CD4-positive, alpha-beta T cell (primary cell): ENCODE measurements at regions of chr19 and their contacts with region 1.

Region 1: GRCh38 chr19:18450931-18451845 is 13.3 kb upstream of the ISYNA1 start:
- DNase-seq: peak; percentile 75 to 93 (median 86)
- ATAC-seq: peak; percentile 94
- H3K4me3 ChIP-seq: no peak overlapping the region
- H3K4me3 Mint-ChIP-seq: no peak overlapping the region
- H3K27ac ChIP-seq: no peak overlapping the region
- H3K27ac Mint-ChIP-seq: no peak overlapping the region
- H3K4me1 ChIP-seq: peaks cover 11% of the 10 kb centered on the region
- H3K4me1 Mint-ChIP-seq: peaks cover 8% of the 10 kb centered on the region
- H3K27me3 ChIP-seq: no peaks in the 10 kb centered on the region
- H3K27me3 Mint-ChIP-seq: no peaks in the 10 kb centered on the region
- CTCF ChIP-seq: peak; percentile 94

Region 2: DNA sequence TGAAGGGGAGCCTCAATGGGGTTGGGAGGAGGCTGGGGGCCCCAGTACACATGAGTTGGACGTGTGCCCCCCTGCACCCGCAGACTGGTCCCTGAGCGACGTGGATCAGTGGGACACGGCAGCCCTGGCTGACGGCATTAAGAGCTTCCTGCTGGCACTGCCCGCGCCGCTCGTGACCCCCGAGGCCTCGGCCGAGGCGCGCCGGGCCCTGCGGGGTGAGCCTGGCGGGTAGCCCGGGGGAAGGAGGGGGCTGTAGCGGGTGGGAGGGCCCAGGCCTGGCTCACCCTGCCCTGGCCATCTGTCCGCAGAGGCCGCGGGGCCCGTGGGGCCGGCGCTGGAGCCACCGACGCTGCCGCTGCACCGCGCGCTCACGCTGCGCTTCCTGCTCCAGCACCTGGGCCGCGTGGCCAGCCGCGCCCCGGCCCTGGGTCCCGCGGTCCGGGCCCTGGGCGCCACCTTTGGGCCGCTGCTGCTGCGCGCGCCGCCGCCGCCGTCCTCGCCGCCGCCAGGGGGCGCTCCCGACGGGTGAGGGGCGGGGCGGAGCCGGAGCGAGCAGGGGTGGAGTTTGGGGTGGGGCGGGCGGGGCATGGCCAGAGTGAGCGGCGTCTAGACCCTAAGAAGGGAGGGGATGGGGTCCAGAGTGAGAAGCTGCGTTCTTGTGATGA is 290.1 kb before region 1 on chr19:
- CTCF ChIA-PET with region 1: no interaction called
- POLR2A ChIA-PET with region 1: no interaction called
- intact Hi-C with region 1: no loop called
- DNase-seq: peak; percentile 58 to 92 (median 82)
- ATAC-seq: peak; percentile 99
- H3K4me3 ChIP-seq: peak overlapping the region; percentile 20
- H3K4me3 Mint-ChIP-seq: no peak overlapping the region
- H3K27ac ChIP-seq: no peak overlapping the region
- H3K27ac Mint-ChIP-seq: no peak overlapping the region
- H3K4me1 ChIP-seq: peaks cover 21% of the 10 kb centered on the region
- H3K4me1 Mint-ChIP-seq: peaks cover 12% of the 10 kb centered on the region
- H3K27me3 ChIP-seq: no peaks in the 10 kb centered on the region
- H3K27me3 Mint-ChIP-seq: no peaks in the 10 kb centered on the region
- CTCF ChIP-seq: peak; percentile 53

Region 3: DNA sequence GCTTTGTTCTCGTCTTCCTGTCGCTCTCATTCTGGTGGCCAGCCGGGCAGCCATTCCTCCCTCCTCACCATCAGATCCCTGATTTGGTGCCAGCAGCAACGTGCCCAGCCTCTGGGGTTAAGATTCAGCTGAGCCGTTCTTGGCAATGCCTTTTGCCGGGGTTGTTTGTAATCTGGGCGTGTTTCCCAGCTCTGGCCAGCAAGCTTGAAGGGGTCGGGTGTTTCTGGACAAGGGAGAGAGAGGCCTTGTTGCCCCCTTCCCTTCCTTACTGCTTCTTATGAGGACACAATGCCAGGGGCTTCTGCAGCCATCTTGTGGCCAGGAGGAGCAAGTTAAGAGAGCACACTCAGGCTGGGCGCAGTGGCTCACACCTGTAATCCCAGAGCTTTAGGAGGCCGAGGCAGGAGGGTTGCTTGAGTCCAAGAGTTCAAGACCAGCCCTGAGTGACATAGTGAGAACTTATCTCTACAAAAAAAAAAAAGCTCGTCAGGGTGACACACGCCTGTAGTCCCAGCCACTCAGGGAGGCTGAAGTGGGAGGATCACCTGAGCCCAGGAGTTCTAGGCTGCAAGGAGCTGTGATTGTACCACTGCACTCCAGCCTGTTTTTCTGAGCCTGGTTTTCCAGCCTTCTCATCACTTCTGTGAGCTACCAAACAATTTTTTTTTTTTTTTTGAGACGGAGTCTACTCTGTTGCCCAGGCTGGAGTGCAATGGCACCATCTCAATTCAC is 221.6 kb after region 1 on chr19:
- CTCF ChIA-PET with region 1: no interaction called
- POLR2A ChIA-PET with region 1: no interaction called
- intact Hi-C with region 1: loop called in 1 of 2 experiments (anchors 5 kb)
- DNase-seq: no peak
- ATAC-seq: no peak
- H3K4me3 ChIP-seq: no peak overlapping the region
- H3K4me3 Mint-ChIP-seq: no peak overlapping the region
- H3K27ac ChIP-seq: no peak overlapping the region
- H3K27ac Mint-ChIP-seq: no peak overlapping the region
- H3K4me1 ChIP-seq: no peaks in the 10 kb centered on the region
- H3K4me1 Mint-ChIP-seq: no peaks in the 10 kb centered on the region
- H3K27me3 ChIP-seq: no peaks in the 10 kb centered on the region
- H3K27me3 Mint-ChIP-seq: no peaks in the 10 kb centered on the region
- CTCF ChIP-seq: no peak

Region 4: DNA sequence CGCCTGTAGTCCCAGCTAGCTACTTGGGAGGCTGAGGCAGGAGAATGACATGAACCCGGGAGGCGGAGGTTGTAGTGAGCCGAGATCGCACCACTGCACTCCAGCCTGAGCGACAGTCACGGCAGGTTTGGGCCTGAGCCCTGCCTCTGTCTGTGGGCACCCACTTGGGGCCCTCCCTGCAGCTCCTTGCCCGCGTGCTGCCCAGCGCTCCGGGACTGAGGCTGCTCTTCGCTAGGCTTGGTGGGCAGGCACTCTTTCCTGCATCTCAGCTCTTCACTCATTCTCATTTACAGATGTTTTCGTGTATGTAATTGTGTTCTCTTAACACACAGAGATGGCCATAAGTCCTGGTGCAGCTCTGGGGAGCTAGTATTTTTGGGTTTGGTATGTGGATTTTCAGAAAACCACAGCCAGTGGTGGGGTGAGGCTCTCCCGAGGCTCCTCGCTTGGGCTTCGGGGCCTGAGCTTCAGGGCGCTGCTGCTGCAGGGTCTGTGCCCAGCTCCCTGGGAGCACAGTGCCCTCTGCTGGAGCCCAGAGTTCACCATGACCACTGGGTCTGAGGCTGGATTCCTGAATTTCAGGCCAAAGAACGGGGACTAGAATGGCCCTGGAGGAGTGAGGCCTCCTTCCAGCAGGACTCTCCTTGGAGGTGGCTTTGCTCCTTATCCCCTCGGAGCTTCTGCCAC is 395.8 kb after region 1 on chr19:
- CTCF ChIA-PET with region 1: interaction called, 5 read pairs
- POLR2A ChIA-PET with region 1: no interaction called
- intact Hi-C with region 1: loop called (anchors 1 kb)
- DNase-seq: peak; percentile 45 to 82 (median 63)
- ATAC-seq: peak; percentile 71
- H3K4me3 ChIP-seq: no peak overlapping the region
- H3K4me3 Mint-ChIP-seq: peak overlapping the region; percentile 74
- H3K27ac ChIP-seq: no peak overlapping the region
- H3K27ac Mint-ChIP-seq: peak overlapping the region; percentile 68
- H3K4me1 ChIP-seq: peaks cover 75% of the 10 kb centered on the region
- H3K4me1 Mint-ChIP-seq: peaks cover 59% of the 10 kb centered on the region
- H3K27me3 ChIP-seq: no peaks in the 10 kb centered on the region
- H3K27me3 Mint-ChIP-seq: no peaks in the 10 kb centered on the region
- CTCF ChIP-seq: peak; percentile 69

Region 5: DNA sequence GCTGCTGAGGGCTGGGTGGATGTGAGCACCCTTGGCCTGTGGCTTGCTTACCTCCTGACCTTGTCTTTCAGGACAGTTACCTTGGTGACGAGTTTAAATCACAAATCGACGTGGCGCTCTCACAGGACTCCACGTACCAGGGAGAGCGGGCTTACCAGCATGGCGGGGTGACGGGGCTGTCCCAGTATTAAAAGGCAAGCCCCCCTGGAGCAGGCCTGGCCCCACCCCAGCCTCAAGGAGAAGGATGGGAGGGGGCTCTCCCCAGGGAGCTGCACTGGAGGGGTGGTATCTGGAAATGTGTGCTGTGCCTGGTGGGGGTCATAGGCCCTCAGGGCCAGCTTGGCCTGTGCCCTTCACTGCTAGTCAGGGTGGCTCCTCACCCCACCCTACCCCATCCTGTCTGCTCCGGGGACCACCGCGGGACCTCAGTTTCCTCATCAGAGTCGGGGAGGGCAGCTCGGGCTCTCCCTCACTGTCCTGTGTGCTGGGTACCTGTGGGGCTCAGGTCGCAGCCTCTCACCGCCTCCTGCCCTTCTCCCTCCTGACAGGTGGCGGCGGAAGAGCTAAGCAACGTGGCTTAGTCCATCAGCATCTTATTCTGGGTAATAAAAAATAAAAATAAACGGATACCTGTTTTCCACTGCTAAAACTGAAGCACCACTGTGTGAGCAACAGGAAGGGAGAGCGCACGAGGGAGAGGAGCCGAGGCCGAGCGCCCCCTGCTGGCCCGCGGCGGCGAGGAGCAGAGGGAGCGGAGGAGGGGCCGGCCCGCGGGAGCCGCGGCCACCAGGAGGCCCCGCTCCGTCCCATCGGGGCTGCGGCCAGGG is 415.0 kb after region 1 on chr19:
- CTCF ChIA-PET with region 1: interaction called, 3 read pairs
- POLR2A ChIA-PET with region 1: no interaction called
- intact Hi-C with region 1: loop called in 1 of 2 experiments (anchors 5 kb)
- DNase-seq: peak in 13 of 14 experiments; percentile 41 to 83 (median 56)
- ATAC-seq: peak; percentile 83
- H3K4me3 ChIP-seq: no peak overlapping the region
- H3K4me3 Mint-ChIP-seq: no peak overlapping the region
- H3K27ac ChIP-seq: no peak overlapping the region
- H3K27ac Mint-ChIP-seq: no peak overlapping the region
- H3K4me1 ChIP-seq: peaks cover 17% of the 10 kb centered on the region
- H3K4me1 Mint-ChIP-seq: peaks cover 9% of the 10 kb centered on the region
- H3K27me3 ChIP-seq: peaks cover 5 to 7% of the 10 kb centered on the region in 2 experiments
- H3K27me3 Mint-ChIP-seq: peaks cover 5% of the 10 kb centered on the region
- CTCF ChIP-seq: peak; percentile 94

Region 6: GRCh38 chr19:18940769-18941407 is 489.7 kb after region 1 on chr19 and contains the start of gene HOMER3:
- CTCF ChIA-PET with region 1: no interaction called
- POLR2A ChIA-PET with region 1: no interaction called
- intact Hi-C with region 1: loop called in 1 of 2 experiments (anchors 5 kb)
- DNase-seq: peak; percentile 58 to 89 (median 76)
- ATAC-seq: peak; percentile 91
- H3K4me3 ChIP-seq: peak within 1 kb of the TSS; percentile 46
- H3K4me3 Mint-ChIP-seq: peak within 1 kb of the TSS; percentile 60
- H3K27ac ChIP-seq: no peak within 1 kb of the TSS
- H3K27ac Mint-ChIP-seq: no peak within 1 kb of the TSS
- H3K4me1 ChIP-seq: peaks cover 18% of the 10 kb centered on the region
- H3K4me1 Mint-ChIP-seq: peaks cover 9% of the 10 kb centered on the region
- H3K27me3 ChIP-seq: peaks cover 16 to 22% of the 10 kb centered on the region in 2 experiments
- H3K27me3 Mint-ChIP-seq: peaks cover 32% of the 10 kb centered on the region
- CTCF ChIP-seq: no peak
- total RNA-seq, gene HOMER3: 1.1 TPM